Sigmoid colon (tissue), 7 donors: ENCODE measurements at regions of chr1 and their contacts with region 1.

Region 1: GRCh38 chr1:34279971-34280370 is 103.3 kb downstream of the C1orf94 start:
- DNase-seq: no peak
- H3K4me3 ChIP-seq: no peak overlapping the region
- H3K27ac ChIP-seq: no peak overlapping the region
- H3K4me1 ChIP-seq: no peaks in the 10 kb centered on the region
- H3K27me3 ChIP-seq: peaks cover 0 to under 1% (median 0%) of the 10 kb centered on the region in 3 donors
- CTCF ChIP-seq: no peak
- EP300 ChIP-seq: no peak
- POLR2A ChIP-seq: no peak

Region 2: DNA sequence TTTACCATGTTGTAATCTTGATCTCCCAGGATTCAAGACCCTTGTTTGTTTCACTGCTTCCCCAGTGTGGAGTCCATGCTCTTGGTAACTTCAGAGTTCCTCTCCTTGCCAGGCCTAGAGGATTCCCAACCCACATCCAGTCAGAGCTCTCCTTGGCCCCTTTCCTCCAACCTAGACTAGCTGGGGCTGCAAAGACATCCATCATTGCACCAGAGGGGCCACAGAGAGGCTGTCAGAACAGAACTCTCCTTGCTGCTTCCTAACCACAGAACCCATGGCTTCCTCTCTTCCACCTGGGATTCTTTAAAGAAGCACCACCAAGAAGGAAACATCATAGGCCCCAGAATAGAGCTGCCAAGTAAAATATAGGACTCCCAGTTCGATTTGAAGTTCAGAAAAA is 335.1 kb before region 1 on chr1:
- intact Hi-C with region 1: loop called (anchors 5 kb)
- DNase-seq: no peak
- H3K4me3 ChIP-seq: no peak overlapping the region
- H3K27ac ChIP-seq: no peak overlapping the region
- H3K4me1 ChIP-seq: no peaks in the 10 kb centered on the region
- H3K27me3 ChIP-seq: no peaks in the 10 kb centered on the region
- CTCF ChIP-seq: no peak
- EP300 ChIP-seq: no peak
- POLR2A ChIP-seq: no peak

Region 3: DNA sequence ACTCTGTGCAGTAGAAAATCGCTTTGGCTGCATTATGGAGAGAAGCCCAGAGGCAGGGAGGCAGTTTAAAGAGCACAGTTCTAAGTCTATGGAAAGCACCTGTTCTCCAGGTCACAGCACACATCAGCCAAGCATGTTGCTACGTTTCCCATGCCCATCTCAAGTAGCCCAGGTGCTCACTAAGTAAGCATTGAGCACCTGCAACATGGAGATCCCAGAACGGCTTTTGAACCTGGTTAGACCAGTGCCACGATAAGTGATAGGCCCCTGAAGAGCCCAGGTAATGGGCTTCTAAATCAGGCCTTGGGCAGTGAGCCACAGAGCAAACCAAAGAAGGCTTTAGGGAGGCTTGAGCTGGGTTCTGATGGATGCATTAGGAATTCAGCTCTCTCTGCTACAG is 83.0 kb after region 1 on chr1:
- intact Hi-C with region 1: no loop called
- DNase-seq: no peak
- H3K4me3 ChIP-seq: no peak overlapping the region
- H3K27ac ChIP-seq: no peak overlapping the region
- H3K4me1 ChIP-seq: no peaks in the 10 kb centered on the region
- H3K27me3 ChIP-seq: peaks cover 0 to 3% (median 0%) of the 10 kb centered on the region in 3 donors
- CTCF ChIP-seq: no peak
- EP300 ChIP-seq: no peak
- POLR2A ChIP-seq: no peak